Activated CD8-positive, alpha-beta memory T cell treated with anti-CD3 and anti-CD28 coated beads, Interleukin-2, amount 10 ng/mL, durations not matched to agents 7 days and 5 days (primary cell): ENCODE measurements at regions of chr19 and their contacts with region 1.

Region 1: GRCh38 chr19:892243-893050 is 540 bp downstream of the MED16 start:
- DNase-seq: no peak
- ATAC-seq: peak; percentile 63
- H3K4me3 Mint-ChIP-seq: peak overlapping the region; percentile 75
- H3K27ac Mint-ChIP-seq: peak overlapping the region; percentile 98
- H3K4me1 Mint-ChIP-seq: peaks cover 23% of the 10 kb centered on the region
- H3K27me3 Mint-ChIP-seq: no peaks in the 10 kb centered on the region

Region 2: GRCh38 chr19:821825-822503 is 70.5 kb before region 1 on chr19 and contains the start of gene PLPPR3:
- CTCF ChIA-PET with region 1: no interaction called
- DNase-seq: no peak
- ATAC-seq: no peak
- H3K4me3 Mint-ChIP-seq: no peak within 1 kb of the TSS
- H3K27ac Mint-ChIP-seq: no peak within 1 kb of the TSS
- H3K4me1 Mint-ChIP-seq: no peaks in the 10 kb centered on the region
- H3K27me3 Mint-ChIP-seq: peaks cover 17% of the 10 kb centered on the region
- total RNA-seq, gene PLPPR3: not detected

Region 3: GRCh38 chr19:870314-870713 is 22.1 kb before region 1 on chr19:
- CTCF ChIA-PET with region 1: no interaction called
- DNase-seq: no peak
- ATAC-seq: no peak
- H3K4me3 Mint-ChIP-seq: no peak overlapping the region
- H3K27ac Mint-ChIP-seq: no peak overlapping the region
- H3K4me1 Mint-ChIP-seq: peaks cover 9% of the 10 kb centered on the region
- H3K27me3 Mint-ChIP-seq: no peaks in the 10 kb centered on the region

Region 4: DNA sequence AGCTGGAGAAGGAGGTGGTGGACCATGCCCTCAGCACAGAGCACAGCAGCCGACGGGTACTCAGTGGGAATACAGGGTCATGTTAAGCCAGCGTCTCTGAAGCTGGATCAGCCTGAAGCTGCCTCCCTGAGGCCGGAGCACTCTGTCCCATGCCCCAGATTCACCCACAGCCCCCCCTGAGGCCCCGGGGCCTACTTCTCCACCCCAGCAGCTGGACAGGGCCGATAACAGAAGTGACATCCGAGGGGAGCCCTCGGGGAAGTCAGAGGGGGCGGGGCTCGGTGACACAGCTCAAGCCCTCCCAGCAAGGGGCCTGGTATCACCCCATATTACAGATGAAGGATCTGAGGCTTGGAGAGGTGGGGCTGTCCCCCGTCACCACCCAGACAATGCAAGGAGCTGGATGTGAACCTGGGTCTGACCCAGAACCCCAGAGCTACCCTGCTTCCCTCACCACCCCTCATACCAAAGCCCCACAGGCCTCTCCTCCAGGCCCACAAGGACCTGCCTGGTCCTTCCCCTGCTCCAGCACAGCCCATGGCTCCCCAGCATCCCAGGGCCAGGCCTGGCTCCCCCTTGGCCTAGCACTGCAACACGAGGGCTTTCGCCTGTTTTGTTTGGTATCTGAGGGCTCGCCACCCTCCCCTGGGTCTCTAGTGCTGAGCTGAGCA is 14.9 kb after region 1 on chr19:
- CTCF ChIA-PET with region 1: interaction called, 11 read pairs
- DNase-seq: no peak
- ATAC-seq: no peak
- H3K4me3 Mint-ChIP-seq: no peak overlapping the region
- H3K27ac Mint-ChIP-seq: peak overlapping the region; percentile 98
- H3K4me1 Mint-ChIP-seq: peaks cover 43% of the 10 kb centered on the region
- H3K27me3 Mint-ChIP-seq: no peaks in the 10 kb centered on the region

Region 5: GRCh38 chr19:1016647-1017114 is 124.2 kb after region 1 on chr19:
- CTCF ChIA-PET with region 1: no interaction called
- DNase-seq: no peak
- ATAC-seq: no peak
- H3K4me3 Mint-ChIP-seq: no peak overlapping the region
- H3K27ac Mint-ChIP-seq: peak overlapping the region; percentile 70
- H3K4me1 Mint-ChIP-seq: peaks cover 43% of the 10 kb centered on the region
- H3K27me3 Mint-ChIP-seq: no peaks in the 10 kb centered on the region